IMR-90 (cell line): ENCODE measurements at regions of chr9 and their contacts with region 1.

Region 1: GRCh38 chr9:13427587-13427986 is 148.1 kb upstream of the MPDZ start:
- DNase-seq: peak; percentile 50
- ATAC-seq: peak; percentile 42; the same call in 1 of the 2 replicates
- H3K4me3 ChIP-seq: no peak overlapping the region
- H3K27ac ChIP-seq: no peak overlapping the region
- H3K4me1 ChIP-seq: no peaks in the 10 kb centered on the region
- H3K27me3 ChIP-seq: peaks cover 15% of the 10 kb centered on the region
- CTCF ChIP-seq: peak; percentile 71
- POLR2A ChIP-seq: no peak
- RAD21 ChIP-seq: peak; percentile 77

Region 2: GRCh38 chr9:13033959-13034693 is 393.5 kb before region 1 on chr9:
- CTCF ChIA-PET with region 1: no interaction called
- POLR2A ChIA-PET with region 1: no interaction called
- dilution Hi-C with region 1: no loop called
- in situ Hi-C with region 1: no loop called
- intact Hi-C with region 1: loop called (anchors 10 kb)
- DNase-seq: peak; percentile 54
- ATAC-seq: peak; percentile 99
- H3K4me3 ChIP-seq: no peak overlapping the region
- H3K27ac ChIP-seq: no peak overlapping the region
- H3K4me1 ChIP-seq: no peaks in the 10 kb centered on the region
- H3K27me3 ChIP-seq: peaks cover 3% of the 10 kb centered on the region; the same call in 1 of the 2 replicates
- CTCF ChIP-seq: peak; percentile 87
- POLR2A ChIP-seq: no peak
- RAD21 ChIP-seq: peak; percentile 91

Region 3: DNA sequence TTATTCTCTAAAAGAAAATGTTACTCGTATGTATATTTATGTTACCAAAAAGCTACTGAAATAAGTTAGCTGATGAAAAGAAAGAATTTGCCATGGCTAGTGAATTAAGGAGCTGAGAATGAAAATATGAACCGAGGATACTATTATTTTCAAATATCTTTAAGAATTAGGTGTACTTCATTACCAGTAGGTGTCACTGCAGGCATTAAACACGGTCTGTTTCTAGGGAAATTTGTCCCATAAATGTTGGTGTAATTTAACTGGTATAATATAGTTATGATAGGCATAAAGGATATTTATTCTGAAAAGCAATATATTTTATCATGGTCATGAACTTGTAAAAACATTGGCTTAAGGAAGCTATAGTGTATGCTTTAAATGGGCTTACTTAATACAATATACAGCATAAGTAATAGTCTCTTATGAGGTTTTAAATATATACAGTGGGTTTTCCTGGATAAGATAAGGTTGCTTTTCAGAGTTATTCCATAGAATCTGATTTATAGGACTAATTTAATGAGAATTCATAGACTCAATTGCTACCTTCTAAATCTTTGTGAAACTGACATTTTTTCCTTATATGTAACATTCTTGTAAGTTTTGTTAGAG is 75.7 kb before region 1 on chr9:
- CTCF ChIA-PET with region 1: no interaction called
- POLR2A ChIA-PET with region 1: no interaction called
- dilution Hi-C with region 1: no loop called
- in situ Hi-C with region 1: no loop called
- intact Hi-C with region 1: loop called (anchors 5 kb)
- DNase-seq: peak; percentile 65
- ATAC-seq: peak; percentile 75
- H3K4me3 ChIP-seq: no peak overlapping the region
- H3K27ac ChIP-seq: no peak overlapping the region
- H3K4me1 ChIP-seq: peaks cover 2% of the 10 kb centered on the region; the same call in 1 of the 2 replicates
- H3K27me3 ChIP-seq: no peaks in the 10 kb centered on the region
- CTCF ChIP-seq: peak; percentile 73
- POLR2A ChIP-seq: no peak
- RAD21 ChIP-seq: peak; percentile 65

Region 4: DNA sequence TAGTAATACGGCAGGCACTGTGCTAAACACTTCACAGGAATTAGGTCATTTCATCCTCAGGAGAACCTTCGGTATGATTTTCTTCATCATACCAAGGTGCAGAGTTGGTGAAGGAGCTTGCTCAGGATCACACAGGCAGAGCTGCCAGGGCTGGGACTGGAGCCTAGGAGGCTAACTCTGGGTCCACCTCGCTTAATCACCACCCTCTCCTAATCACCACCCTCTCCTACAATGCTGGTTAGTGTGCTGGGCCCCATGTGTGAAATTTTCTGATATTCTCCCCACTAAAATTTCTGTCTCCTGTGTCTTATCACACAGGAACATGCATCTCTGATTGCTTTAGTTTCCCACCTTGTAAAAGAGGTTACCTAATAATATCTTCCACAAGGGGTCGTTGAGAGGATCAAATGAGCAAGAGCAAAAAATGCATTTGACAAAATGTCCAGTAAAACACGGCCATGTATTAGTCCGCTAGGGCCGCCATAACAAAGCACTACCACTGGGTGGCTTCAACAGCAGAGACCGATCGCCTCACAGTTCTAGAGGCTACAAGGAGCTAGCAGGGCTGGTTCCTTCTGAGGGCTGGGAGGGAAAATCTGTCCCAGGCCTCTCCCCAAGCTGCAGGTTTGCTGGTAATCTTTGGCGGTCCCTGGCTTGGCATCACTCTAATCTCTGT is 1014.5 kb after region 1 on chr9:
- CTCF ChIA-PET with region 1: no interaction called
- POLR2A ChIA-PET with region 1: no interaction called
- dilution Hi-C with region 1: loop called (anchors 25 kb)
- in situ Hi-C with region 1: loop called (anchors 5 kb)
- intact Hi-C with region 1: no loop called
- DNase-seq: peak; percentile 5
- ATAC-seq: peak; percentile 42; the same call in 1 of the 2 replicates
- H3K4me3 ChIP-seq: no peak overlapping the region
- H3K27ac ChIP-seq: no peak overlapping the region
- H3K4me1 ChIP-seq: peaks cover 7% of the 10 kb centered on the region; the same call in 1 of the 2 replicates
- H3K27me3 ChIP-seq: peaks cover 13% of the 10 kb centered on the region
- CTCF ChIP-seq: peak; percentile 26; the same call in 1 of the 2 replicates
- POLR2A ChIP-seq: no peak
- RAD21 ChIP-seq: peak; percentile 20; the same call in 1 of the 2 replicates

Region 5: DNA sequence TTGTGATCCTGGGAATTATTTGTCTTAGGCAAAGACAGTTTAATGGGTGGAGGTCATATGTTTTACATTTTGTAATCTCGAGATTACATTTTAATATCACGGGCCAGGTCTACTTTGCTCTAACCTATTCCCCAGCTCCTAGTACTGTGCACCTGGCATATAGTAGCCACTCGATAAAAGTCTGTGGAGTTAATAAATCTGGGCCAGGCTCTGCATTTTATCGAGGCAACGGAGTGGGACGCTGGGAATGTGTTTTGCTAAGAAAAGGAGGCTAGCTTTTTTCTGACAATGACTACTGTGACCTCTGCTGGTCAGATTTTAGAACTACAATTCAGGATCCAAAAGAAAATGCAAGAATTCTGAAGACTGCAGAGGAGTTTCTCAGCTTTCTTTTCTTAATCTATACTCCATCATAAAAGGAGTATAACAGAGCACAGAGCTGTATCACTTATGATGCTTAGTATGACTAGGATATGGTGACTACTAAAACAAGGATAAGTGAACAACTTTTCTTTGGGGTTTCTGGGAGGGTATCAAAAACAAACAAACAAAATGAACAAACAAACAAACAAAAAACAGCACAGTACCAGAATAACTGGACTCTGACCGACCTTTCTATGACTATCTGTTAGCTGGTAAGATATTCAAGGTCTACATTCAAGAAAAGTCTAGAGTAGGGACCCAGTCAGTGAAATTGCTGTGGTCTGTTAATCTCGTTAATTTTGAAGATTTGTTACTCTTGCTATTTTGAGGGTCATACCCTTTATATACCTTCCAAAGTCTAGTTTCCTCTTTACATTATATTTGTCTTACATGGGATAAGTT is 1341.0 kb after region 1 on chr9:
- CTCF ChIA-PET with region 1: no interaction called
- POLR2A ChIA-PET with region 1: no interaction called
- dilution Hi-C with region 1: no loop called
- in situ Hi-C with region 1: no loop called
- intact Hi-C with region 1: loop called (anchors 10 kb)
- DNase-seq: peak; percentile 51
- ATAC-seq: peak; percentile 75
- H3K4me3 ChIP-seq: no peak overlapping the region
- H3K27ac ChIP-seq: no peak overlapping the region
- H3K4me1 ChIP-seq: no peaks in the 10 kb centered on the region
- H3K27me3 ChIP-seq: no peaks in the 10 kb centered on the region
- CTCF ChIP-seq: peak; percentile 72
- POLR2A ChIP-seq: no peak
- RAD21 ChIP-seq: peak; percentile 73